ENCODE measurements at regions of chr1 and their contacts with region 1.

Region 1: GRCh38 chr1:109649491-109649914 is 6.4 kb upstream of the GSTM4 start:
- DNase-seq: no peak
- H3K4me3 ChIP-seq: no peak overlapping the region
- H3K4me3 Mint-ChIP-seq: peak overlapping the region in 1 of 7 donors; percentile 19
- H3K27ac ChIP-seq: no peak overlapping the region
- H3K27ac Mint-ChIP-seq: no peak overlapping the region
- H3K4me1 ChIP-seq: no peaks in the 10 kb centered on the region
- H3K4me1 Mint-ChIP-seq: no peaks in the 10 kb centered on the region
- H3K27me3 ChIP-seq: no peaks in the 10 kb centered on the region
- H3K27me3 Mint-ChIP-seq: peaks cover 10 to 30% of the 10 kb centered on the region in 2 donors

Region 2: DNA sequence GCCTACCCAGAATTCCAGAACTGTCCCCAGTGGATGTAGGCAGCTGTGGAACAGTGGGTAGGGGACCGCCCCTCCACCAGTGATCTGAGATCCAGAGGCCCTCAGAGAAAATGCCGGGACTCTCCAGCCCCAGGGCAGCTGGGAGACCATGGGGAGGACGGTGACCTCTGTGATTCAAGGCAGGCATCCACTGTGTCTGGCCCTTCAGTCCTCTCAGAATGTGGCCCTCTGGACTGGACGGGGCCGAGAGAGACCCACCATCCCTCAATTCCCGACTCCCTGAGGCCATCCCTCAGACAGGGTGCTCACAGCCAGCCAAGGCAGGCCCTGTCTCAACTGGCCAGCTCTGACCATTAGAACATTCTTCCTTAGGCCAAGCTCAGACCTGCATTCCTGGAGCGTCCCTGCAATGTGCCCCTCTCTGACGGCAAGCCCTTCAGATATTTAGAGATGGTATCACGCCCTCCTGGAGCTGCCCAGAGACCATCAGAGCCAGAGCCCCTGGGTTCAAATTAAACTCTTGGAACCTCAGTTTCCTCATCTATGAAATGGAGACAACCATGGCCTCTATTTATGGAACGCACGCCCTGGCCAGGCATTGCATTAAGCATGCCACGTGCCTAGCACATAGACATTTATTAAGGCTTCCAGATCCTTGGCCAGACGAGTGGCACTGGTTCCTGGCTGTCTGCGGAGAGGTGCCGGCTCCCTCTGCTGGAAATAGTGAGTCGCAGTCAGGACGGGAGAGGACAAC is 123.8 kb after region 1 on chr1:
- CTCF ChIA-PET with region 1: interaction called, 22 read pairs
- POLR2A ChIA-PET with region 1: no interaction called
- DNase-seq: peak; percentile 27 to 81 (median 61)
- H3K4me3 ChIP-seq: no peak overlapping the region
- H3K4me3 Mint-ChIP-seq: no peak overlapping the region
- H3K27ac ChIP-seq: no peak overlapping the region
- H3K27ac Mint-ChIP-seq: peak overlapping the region in 2 of 8 donors; percentile 6 to 33
- H3K4me1 ChIP-seq: peaks cover 4% of the 10 kb centered on the region
- H3K4me1 Mint-ChIP-seq: peaks cover 5 to 15% (median 5%) of the 10 kb centered on the region in 3 donors
- H3K27me3 ChIP-seq: no peaks in the 10 kb centered on the region
- H3K27me3 Mint-ChIP-seq: peaks cover 10 to 19% of the 10 kb centered on the region in 2 donors